Activated CD4-positive, alpha-beta memory T cell treated with anti-CD3 and anti-CD28 coated beads for 36 hours (primary cell): ENCODE measurements at regions of chr17 and their contacts with region 1.

Region 1: GRCh38 chr17:75784473-75785015 is at the start of gene UNK:
- DNase-seq: peak; percentile 97
- H3K4me3 Mint-ChIP-seq: peak within 1 kb of the TSS; percentile 90
- H3K27ac Mint-ChIP-seq: peak within 1 kb of the TSS; percentile 98
- H3K4me1 Mint-ChIP-seq: peaks cover 35% of the 10 kb centered on the region
- H3K27me3 Mint-ChIP-seq: peaks cover 1% of the 10 kb centered on the region
- total RNA-seq, gene UNK: 21.8 to 24.7 TPM

Region 2: DNA sequence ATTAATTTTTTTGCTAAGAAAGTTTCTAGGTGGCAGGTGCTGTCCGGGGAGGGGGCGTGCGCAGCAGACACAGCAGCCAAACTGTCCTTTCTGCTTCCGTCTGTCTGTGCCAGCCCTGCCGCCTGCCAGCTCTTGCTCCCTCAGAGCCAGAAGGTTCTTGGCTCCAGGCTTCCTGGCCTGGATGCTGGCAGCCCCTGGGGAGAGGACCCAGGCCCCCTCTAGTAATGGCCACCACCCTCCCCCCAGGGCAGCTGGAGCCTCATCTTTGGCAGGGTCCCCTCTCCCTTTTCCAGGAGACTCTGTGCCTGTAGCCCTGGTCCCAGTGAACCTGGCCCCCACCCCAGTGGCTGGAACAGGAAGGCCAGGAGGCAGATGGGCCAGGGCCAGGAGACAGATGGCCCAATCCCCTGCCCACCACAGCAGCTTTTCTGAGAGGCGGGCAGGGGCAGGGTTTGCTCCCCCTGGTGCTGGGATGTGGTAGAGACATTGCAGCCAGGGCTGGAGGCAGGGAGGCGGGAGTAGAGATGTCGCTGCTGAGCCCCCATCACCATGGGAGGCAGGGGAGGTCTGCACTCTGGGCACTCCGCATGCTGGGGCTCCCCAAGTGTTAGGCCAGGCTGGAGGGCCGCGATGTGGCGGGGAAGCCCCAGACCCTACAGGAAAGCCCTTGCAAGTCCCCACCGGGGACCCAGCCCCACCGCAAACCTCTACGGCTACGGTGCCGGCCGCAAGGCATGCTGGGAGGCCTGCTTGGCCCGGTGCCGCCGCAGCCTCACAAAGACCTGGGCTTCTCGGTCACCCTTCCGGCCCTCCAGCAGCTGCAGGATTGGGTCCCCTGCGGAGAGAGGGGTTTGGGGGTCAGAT is 42.9 kb after region 1 on chr17:
- CTCF ChIA-PET with region 1: interaction called, 14 read pairs
- POLR2A ChIA-PET with region 1: interaction called, 8 read pairs
- intact Hi-C with region 1: loop called (anchors 2 kb)
- DNase-seq: peak; percentile 79
- H3K4me3 Mint-ChIP-seq: peak overlapping the region; percentile 46
- H3K27ac Mint-ChIP-seq: peak overlapping the region; percentile 87
- H3K4me1 Mint-ChIP-seq: peaks cover 15% of the 10 kb centered on the region
- H3K27me3 Mint-ChIP-seq: no peaks in the 10 kb centered on the region

Region 3: GRCh38 chr17:75855310-75856081 is 71.0 kb after region 1 on chr17 and contains the start of gene WBP2:
- CTCF ChIA-PET with region 1: interaction called, 15 read pairs
- POLR2A ChIA-PET with region 1: interaction called, 9 read pairs
- intact Hi-C with region 1: loop called (anchors 1 kb)
- DNase-seq: peak; percentile 99
- H3K4me3 Mint-ChIP-seq: no peak within 1 kb of the TSS
- H3K27ac Mint-ChIP-seq: peak within 1 kb of the TSS; percentile 86
- H3K4me1 Mint-ChIP-seq: peaks cover 35% of the 10 kb centered on the region
- H3K27me3 Mint-ChIP-seq: no peaks in the 10 kb centered on the region
- total RNA-seq, gene WBP2: 79.1 to 80.6 TPM

Region 4: GRCh38 chr17:76072148-76072858 is 287.8 kb after region 1 on chr17 and contains the start of gene SRP68:
- CTCF ChIA-PET with region 1: interaction called, 4 read pairs
- POLR2A ChIA-PET with region 1: interaction called, 6 read pairs
- intact Hi-C with region 1: loop called (anchors 10 kb)
- DNase-seq: peak; percentile 90
- H3K4me3 Mint-ChIP-seq: peak within 1 kb of the TSS; percentile 99
- H3K27ac Mint-ChIP-seq: peak within 1 kb of the TSS; percentile 100
- H3K4me1 Mint-ChIP-seq: peaks cover 45% of the 10 kb centered on the region
- H3K27me3 Mint-ChIP-seq: peaks cover 27% of the 10 kb centered on the region
- total RNA-seq, gene SRP68: 142 to 148 TPM

Region 5: DNA sequence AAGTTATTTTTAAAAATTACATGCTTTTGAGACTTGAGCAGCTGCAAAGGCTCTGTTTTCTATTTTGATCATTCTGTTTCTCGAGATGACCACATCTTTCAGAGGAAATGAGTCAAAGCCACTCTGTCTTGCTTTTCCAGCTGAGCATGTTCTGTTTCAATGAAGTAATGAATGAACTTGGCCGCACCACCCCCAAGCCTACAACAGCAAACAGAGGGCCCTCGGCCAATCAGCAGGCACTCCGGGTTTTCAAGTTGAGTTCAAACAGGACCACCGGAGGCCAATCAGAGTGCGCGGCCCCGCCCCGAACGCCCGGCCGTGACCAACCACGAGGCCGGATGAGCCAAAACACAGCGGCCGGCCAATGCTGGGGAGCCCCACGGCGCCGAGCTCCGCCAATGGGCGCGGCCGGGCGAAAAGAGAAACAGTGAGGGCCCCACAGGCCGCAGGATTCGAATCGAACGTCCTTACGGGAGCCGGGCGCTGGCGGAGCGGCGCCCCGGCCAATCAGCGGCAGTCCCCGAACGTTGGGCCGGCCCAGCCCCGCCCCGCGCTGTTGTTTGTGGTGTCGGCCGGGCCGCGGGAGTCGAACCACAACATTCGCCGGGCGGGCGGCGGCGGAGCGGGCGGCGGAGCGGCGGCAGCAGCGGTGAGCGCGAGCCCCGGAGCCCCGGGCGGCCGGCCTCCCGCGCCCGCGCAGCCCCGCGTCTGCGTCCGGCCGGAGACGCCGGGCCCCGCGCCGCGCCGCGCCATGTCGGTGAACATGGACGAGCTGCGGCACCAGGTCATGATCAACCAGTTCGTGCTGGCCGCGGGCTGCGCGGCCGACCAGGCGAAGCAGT is 480.4 kb after region 1 on chr17 and contains the start of gene UBALD2:
- CTCF ChIA-PET with region 1: no interaction called
- POLR2A ChIA-PET with region 1: interaction called, 3 read pairs
- intact Hi-C with region 1: loop called (anchors 2 kb)
- DNase-seq: peak; percentile 100
- H3K4me3 Mint-ChIP-seq: peak within 1 kb of the TSS; percentile 92
- H3K27ac Mint-ChIP-seq: peak within 1 kb of the TSS; percentile 97
- H3K4me1 Mint-ChIP-seq: peaks cover 48% of the 10 kb centered on the region
- H3K27me3 Mint-ChIP-seq: no peaks in the 10 kb centered on the region
- total RNA-seq, gene UBALD2: 317 TPM